ENCODE measurements at regions of chr6 and their contacts with region 1.

Region 1: DNA sequence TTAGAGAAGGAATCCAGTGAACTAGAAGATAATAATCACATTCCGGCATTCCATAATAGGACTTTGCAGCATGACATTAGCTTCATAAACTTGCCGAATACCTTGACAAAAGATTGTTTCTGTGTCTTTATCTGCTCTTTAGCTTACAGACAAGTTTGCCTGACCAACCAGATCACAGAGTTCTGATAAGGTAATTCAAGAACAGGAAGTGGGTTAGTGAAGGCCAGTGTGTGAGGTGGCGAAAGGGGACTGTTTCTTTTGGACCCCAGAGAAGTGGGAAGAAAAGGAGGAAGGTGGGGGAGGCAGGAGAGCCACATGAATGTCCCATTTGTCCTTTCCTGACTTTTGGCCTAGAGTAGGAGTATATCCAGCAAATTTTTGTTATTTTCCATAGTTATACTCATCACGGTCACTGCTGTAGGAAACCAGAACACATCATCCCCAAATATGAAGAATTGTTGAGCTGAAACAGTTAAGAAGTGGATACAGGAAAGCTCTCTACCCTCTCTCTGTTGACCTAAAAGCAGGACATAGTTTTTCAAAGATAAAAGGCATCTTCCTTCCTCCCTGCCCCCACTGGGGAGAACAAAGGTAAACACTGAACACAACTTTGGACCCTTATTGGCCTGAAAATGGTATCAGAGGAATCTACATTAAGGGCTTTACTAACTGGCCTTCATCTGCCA is 72.4 kb upstream of the TNFAIP3 start:
- DNase-seq: peak; percentile 99
- ATAC-seq: peak; percentile 88
- H3K4me3 ChIP-seq: peak overlapping the region; percentile 5 to 47 (median 5); a peak in 2 of 6 replicates
- H3K27ac ChIP-seq: peak overlapping the region; percentile 98
- H3K4me1 ChIP-seq: peaks cover 96% of the 10 kb centered on the region
- H3K27me3 ChIP-seq: no peaks in the 10 kb centered on the region
- CTCF ChIP-seq: peak; percentile 20; the same call in 1 of the 2 replicates
- EP300 ChIP-seq: peak; percentile 86 to 99; a peak in 3 of 4 replicates
- POLR2A ChIP-seq: no peak
- RAD21 ChIP-seq: peak; percentile 77

Region 2: DNA sequence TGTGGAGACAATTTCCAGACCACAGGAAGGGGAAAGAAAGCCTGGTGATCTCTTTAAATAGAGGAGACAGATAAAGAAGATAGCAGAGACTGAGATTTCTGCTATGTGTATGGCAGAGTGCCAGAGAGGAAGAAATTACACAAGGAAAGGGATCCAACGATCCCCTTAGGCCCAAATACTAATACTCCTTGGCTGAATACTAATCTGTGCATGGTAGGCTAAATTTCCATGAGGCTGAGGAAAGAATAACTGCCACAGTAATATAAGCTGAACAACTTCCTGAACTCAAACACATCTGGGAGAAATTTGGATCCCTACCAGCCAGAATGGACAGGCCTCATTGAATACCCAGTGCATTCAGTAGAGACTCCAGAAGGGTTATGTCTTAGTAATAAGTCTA is 10.9 kb before region 1 on chr6:
- CTCF ChIA-PET with region 1: no interaction called
- POLR2A ChIA-PET with region 1: interaction called, 10 read pairs
- in situ Hi-C with region 1: no loop called
- intact Hi-C with region 1: no loop called
- DNase-seq: no peak
- ATAC-seq: no peak
- H3K4me3 ChIP-seq: no peak overlapping the region
- H3K27ac ChIP-seq: no peak overlapping the region
- H3K4me1 ChIP-seq: peaks cover 57% of the 10 kb centered on the region
- H3K27me3 ChIP-seq: no peaks in the 10 kb centered on the region
- CTCF ChIP-seq: no peak
- EP300 ChIP-seq: no peak
- POLR2A ChIP-seq: no peak
- RAD21 ChIP-seq: no peak

Region 3: GRCh38 chr6:137975188-137975940 is 180.7 kb after region 1 on chr6:
- CTCF ChIA-PET with region 1: no interaction called
- POLR2A ChIA-PET with region 1: no interaction called
- in situ Hi-C with region 1: no loop called
- intact Hi-C with region 1: no loop called
- DNase-seq: peak; percentile 23
- ATAC-seq: no peak
- H3K4me3 ChIP-seq: no peak overlapping the region
- H3K27ac ChIP-seq: no peak overlapping the region
- H3K4me1 ChIP-seq: no peaks in the 10 kb centered on the region
- H3K27me3 ChIP-seq: peaks cover 0 to 46% of the 10 kb centered on the region in 2 experiments; a peak in 3 of 5 replicates
- CTCF ChIP-seq: peak; percentile 37
- EP300 ChIP-seq: no peak
- POLR2A ChIP-seq: no peak
- RAD21 ChIP-seq: no peak